Heart left ventricle (tissue), 16 donors: ENCODE measurements at regions of chr9 and their contacts with region 1.

Region 1: GRCh38 chr9:120152295-120152694 is 427.7 kb downstream of the CDK5RAP2 start:
- DNase-seq: peak in 3 of 5 donors; percentile 11 to 38 (median 25)
- ATAC-seq: peak in 3 of 4 donors; percentile 39 to 59 (median 48)
- H3K4me3 ChIP-seq: no peak overlapping the region
- H3K27ac ChIP-seq: no peak overlapping the region
- H3K4me1 ChIP-seq: peaks cover 0 to 4% (median 0%) of the 10 kb centered on the region in 12 donors
- H3K27me3 ChIP-seq: peaks cover 0 to 7% (median 0%) of the 10 kb centered on the region in 9 donors
- CTCF ChIP-seq: no peak
- POLR2A ChIP-seq: no peak

Region 2: DNA sequence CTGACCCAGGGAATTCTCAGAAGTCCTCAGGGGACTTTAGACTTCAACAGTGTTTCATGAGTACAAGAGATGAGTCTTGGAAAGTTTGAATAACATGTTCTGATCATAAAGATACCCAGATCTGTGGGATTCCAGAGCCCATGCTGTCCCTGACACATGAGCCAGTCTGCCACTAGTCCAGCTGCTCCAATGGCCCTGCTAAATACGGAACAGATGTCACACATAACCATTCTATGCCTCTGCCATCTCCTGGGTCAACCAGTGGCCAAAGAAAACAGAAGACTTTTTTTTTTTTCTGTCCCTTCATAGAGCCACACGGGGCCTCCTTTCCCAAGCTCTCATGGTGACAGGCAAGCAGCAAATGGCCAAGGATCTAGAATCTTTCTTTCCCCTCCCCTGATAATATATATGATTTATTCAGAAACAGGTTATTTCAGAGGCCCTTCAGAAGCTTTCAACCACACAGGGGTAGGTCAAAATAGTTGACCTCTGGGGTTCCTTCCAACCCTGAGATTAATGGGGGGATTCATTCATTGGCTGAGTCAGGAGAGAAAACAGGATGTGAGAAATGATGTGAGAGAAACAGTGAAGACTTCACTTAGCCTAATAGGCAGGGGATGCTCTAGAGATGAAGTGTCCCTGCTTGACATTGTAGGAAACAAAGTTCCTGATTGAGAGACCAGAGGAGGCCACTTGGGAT is 60.0 kb after region 1 on chr9:
- intact Hi-C with region 1: loop called in 1 of 10 experiments (anchors 10 kb)
- DNase-seq: no peak
- ATAC-seq: no peak
- H3K4me3 ChIP-seq: no peak overlapping the region
- H3K27ac ChIP-seq: no peak overlapping the region
- H3K4me1 ChIP-seq: no peaks in the 10 kb centered on the region
- H3K27me3 ChIP-seq: no peaks in the 10 kb centered on the region
- CTCF ChIP-seq: no peak
- POLR2A ChIP-seq: no peak